ENCODE measurements at regions of chr1 and their contacts with region 1.

Region 1: DNA sequence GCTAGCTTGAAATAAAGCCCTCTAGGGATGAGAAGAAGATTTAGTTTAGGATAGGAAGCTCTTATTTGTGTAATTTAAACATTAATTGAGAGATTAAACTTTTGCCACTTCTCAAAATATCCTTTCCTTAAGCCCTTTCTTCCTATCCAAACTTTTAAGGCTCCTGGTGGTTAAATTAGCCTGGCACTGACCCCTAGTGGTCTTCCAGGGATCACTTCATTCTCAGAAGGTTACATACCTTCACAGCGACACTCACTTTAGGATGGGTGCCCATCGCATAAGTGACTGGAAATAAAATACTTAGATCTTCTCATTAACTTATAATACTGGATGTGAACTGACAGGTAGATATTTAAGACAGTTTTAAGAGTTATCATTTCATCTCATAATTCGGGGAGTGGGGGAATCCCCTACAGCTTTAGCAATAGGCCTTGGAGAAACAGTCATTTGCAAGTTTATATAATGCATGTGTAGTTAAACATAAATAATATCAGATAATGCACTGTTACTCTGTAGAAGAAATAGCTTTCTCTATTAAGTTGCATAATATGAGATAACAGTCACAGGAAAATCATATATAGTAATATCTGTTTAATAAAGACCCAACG is 7.4 kb downstream of the LHX9 start:
- DNase-seq: peak; percentile 58
- H3K4me3 Mint-ChIP-seq: no peak overlapping the region
- H3K27ac Mint-ChIP-seq: no peak overlapping the region
- H3K4me1 Mint-ChIP-seq: peaks cover 15% of the 10 kb centered on the region
- H3K27me3 Mint-ChIP-seq: peaks cover 49% of the 10 kb centered on the region

Region 2: DNA sequence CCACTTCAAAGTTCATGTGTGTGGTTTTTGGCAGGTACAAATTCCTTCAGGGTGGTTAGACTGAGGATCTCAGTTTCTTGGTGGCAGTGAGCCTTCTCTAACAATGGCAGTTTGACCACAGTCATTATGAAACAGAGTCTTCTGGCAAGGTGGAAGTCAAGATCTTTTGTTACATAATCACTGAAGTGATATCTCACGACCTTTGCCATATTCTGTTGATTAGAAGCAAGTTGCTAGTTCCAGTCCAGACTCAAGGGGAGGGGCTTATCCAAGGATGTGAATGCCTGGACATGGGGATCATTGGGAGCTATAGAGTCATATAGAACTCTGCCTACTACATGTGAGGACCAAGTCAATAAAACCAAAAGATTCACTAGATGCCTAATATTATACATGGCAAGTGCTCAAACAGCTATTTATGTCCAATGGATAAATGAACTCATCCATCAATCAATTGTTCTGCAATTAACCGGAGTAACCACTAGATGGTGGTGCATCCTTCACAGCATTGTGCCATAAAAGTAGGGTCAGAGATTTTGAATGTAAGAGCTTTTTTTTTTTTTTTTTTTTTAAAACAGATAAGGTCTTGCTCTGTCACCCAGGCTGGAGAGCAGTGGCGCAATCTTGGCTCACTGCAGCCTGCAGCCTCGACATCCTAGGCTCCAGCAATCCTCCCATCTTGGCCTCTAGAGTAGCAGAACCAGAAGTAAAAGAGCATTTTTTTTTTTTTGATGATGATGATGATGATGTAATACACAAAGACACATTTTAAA is 524.7 kb before region 1 on chr1:
- CTCF ChIA-PET with region 1: no interaction called
- intact Hi-C with region 1: loop called (anchors 5 kb)
- DNase-seq: peak; percentile 28
- H3K4me3 Mint-ChIP-seq: peak overlapping the region; percentile 32
- H3K27ac Mint-ChIP-seq: no peak overlapping the region
- H3K4me1 Mint-ChIP-seq: no peaks in the 10 kb centered on the region
- H3K27me3 Mint-ChIP-seq: no peaks in the 10 kb centered on the region

Region 3: DNA sequence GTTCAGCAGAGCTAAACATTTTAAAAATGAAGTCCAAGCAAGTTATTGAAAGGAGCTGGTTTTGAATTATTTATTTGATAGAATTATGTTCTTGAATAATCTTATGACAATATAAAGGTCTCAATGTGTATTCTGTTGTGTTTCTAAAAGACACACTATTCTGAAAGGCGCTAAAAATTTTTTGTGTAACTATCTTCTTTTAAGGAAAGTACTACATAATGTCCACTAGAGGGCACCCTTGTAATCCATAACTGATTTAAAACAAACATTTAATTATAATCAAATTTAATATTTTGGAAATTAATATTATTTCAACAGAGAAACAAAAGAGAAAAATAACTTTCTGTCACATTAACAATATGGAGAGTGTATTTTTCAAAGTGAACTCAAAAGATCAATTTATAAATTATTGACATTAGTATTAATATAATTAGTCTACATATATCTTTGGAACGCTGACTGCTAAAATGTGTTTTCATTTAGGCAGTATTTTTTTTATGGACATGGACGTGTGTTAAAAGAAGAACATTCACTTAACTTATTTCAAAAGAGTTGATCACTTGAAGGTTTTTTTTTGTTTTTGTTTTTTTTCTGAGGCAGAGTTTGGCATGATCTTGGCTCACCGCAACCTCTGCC is 397.8 kb before region 1 on chr1:
- CTCF ChIA-PET with region 1: interaction called, 17 read pairs
- intact Hi-C with region 1: loop called (anchors 1 kb)
- DNase-seq: no peak
- H3K4me3 Mint-ChIP-seq: no peak overlapping the region
- H3K27ac Mint-ChIP-seq: no peak overlapping the region
- H3K4me1 Mint-ChIP-seq: no peaks in the 10 kb centered on the region
- H3K27me3 Mint-ChIP-seq: no peaks in the 10 kb centered on the region

Region 4: GRCh38 chr1:197692965-197693364 is 231.7 kb before region 1 on chr1:
- CTCF ChIA-PET with region 1: no interaction called
- intact Hi-C with region 1: loop called (anchors 2 kb)
- DNase-seq: no peak
- H3K4me3 Mint-ChIP-seq: no peak overlapping the region
- H3K27ac Mint-ChIP-seq: no peak overlapping the region
- H3K4me1 Mint-ChIP-seq: peaks cover 17% of the 10 kb centered on the region
- H3K27me3 Mint-ChIP-seq: no peaks in the 10 kb centered on the region

Region 5: DNA sequence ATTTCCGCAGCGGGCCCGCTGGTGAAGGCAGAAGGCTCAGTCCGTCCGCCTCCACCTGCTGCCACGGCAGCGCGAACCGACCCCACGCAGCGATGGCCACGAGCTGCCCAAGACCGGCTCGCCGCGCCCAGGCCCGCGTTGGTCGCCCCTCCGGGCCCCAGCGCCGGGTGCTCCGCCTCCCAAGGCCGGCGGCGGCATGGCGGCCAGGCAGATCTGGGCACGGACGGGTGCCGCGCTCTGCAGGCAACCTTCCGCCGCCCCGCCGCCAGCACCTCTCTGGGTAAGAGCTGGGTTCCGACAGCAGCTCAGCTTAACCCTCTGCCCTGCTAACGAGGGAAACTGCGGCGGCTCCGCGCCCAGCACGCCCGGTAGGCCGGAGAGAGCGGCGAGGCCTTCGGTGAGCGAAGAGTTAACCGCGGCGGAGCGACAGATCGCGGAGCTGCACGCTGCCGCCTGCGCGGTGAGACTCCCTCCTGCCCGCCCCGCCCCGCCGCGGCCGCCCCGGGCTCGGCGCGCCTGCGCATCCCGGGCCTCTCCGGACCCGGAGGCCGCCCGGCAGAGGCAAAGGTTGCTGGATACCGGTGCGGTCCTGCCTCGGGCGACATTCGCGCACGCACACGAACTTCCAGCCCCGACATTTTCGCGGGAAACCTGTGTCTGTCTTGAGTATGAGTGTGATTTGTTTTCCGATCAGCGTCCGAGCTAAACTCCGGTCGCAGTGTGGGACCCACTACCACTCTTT is 22.0 kb before region 1 on chr1 and contains the start of gene C1orf53:
- CTCF ChIA-PET with region 1: interaction called, 11 read pairs
- intact Hi-C with region 1: loop called (anchors 2 kb)
- DNase-seq: peak; percentile 77
- H3K4me3 Mint-ChIP-seq: peak within 1 kb of the TSS; percentile 84
- H3K27ac Mint-ChIP-seq: peak within 1 kb of the TSS; percentile 55
- H3K4me1 Mint-ChIP-seq: peaks cover 10% of the 10 kb centered on the region
- H3K27me3 Mint-ChIP-seq: peaks cover 45% of the 10 kb centered on the region
- total RNA-seq, gene C1orf53: 0.52 TPM in 1 of 2 experiments, not detected in the other